GM23248 (cell line): ENCODE measurements at regions of chr3 and their contacts with region 1.

Region 1: DNA sequence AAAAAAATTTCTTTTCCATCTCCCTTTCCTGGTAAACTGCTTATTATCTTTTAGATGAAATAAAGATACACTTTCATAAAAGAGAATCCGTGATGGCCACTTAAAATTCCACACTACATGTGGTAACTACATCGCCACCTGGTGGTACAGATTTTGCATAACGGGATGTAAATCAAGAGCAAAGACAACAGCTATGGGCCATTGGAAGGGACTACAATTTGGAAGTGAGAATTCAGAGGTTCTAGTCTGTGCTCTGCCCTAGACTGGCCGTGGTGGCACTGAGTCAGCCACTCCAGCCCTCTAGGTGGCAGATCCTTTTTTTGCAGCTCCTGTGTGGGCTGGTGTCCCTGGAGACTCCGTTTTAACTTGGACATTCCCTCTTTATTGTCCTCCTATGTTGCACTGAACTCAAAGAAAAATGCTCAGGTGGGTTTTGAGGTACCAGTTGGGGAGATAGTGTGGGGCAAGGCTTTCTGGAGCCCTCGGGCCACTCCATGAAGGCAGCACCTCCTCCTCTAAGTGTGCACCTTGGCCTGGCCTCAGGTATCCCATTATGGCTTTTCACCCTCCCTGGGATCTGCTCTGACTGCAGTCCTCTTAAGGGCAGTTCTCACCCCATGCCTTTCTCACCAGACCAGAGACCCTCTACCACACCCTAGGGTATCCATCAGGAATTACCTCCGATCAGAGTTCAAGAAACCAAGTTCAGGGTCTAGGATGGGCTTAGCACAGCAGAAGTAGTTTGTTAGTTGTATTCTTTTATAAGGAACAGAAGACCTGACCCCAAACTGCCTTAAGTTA is 54.9 kb downstream of the SPSB4 start:
- DNase-seq: peak; percentile 86
- H3K4me3 ChIP-seq: no peak overlapping the region
- H3K27ac ChIP-seq: no peak overlapping the region
- H3K4me1 ChIP-seq: no peaks in the 10 kb centered on the region
- H3K27me3 ChIP-seq: no peaks in the 10 kb centered on the region

Region 2: DNA sequence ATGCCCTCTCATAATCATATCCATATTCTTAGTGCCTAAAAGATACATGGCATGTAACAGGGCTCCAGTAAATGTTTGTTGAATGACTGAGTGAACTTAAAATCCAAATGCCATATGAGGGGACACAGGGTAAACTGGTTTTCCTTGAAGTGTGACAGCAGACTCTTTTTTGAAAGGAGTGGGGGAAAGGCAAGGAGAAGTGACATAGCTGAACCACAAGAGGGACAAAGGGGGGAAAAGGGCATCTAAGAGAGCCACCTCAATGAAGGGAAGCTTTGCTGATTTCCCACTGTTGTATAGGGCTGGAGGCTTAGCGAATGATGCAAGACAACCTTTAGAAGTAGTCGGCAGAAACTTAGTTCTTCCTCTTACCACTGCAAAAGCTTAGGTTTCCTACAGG is 419.1 kb before region 1 on chr3:
- in situ Hi-C with region 1: no loop called
- DNase-seq: no peak
- H3K4me3 ChIP-seq: no peak overlapping the region
- H3K27ac ChIP-seq: no peak overlapping the region
- H3K4me1 ChIP-seq: no peaks in the 10 kb centered on the region
- H3K27me3 ChIP-seq: no peaks in the 10 kb centered on the region; the same call in 1 of the 2 replicates

Region 3: DNA sequence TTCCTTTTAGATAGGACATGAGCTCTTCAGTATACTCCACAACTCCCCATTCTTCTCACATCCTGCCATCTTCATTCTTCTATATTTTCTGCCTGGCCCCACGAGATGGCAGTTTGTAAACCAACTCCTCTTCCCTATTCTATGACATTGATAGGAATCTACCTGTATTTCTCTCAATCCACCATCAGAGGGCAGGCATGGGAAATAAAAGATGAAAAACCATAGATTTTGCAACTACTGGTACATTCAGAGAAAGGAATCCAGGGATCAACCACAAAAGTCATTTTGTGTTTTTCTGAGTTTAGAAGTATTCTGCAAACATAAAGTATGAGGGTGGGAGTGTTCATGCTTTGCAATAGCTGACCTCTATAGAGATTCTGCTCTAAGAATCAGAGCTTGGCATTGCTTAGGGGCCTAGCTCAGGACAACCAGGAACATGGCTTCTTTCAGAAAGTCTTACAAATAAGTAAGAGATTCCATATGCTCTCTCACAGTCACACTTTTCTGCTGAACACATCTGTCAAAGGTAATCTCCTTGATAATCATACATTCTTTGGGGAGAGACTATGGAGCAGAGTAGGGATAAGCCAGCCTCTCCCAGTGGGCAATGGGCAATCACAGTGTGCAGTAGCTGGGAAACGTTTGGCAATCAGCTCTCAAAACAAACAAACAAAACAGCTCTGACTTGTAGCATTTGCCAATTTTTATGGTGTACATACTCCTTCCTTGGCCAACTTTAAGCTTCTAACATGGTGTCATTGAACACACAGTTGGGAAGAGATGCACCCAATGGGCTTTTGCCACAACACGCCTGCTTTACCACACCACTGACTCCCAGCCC is 207.5 kb before region 1 on chr3:
- in situ Hi-C with region 1: loop called (anchors 5 kb)
- DNase-seq: peak; percentile 89
- H3K4me3 ChIP-seq: no peak overlapping the region
- H3K27ac ChIP-seq: peak overlapping the region; percentile 15; the same call in 1 of the 2 replicates
- H3K4me1 ChIP-seq: peaks cover 6% of the 10 kb centered on the region
- H3K27me3 ChIP-seq: peaks cover 26% of the 10 kb centered on the region

Region 4: DNA sequence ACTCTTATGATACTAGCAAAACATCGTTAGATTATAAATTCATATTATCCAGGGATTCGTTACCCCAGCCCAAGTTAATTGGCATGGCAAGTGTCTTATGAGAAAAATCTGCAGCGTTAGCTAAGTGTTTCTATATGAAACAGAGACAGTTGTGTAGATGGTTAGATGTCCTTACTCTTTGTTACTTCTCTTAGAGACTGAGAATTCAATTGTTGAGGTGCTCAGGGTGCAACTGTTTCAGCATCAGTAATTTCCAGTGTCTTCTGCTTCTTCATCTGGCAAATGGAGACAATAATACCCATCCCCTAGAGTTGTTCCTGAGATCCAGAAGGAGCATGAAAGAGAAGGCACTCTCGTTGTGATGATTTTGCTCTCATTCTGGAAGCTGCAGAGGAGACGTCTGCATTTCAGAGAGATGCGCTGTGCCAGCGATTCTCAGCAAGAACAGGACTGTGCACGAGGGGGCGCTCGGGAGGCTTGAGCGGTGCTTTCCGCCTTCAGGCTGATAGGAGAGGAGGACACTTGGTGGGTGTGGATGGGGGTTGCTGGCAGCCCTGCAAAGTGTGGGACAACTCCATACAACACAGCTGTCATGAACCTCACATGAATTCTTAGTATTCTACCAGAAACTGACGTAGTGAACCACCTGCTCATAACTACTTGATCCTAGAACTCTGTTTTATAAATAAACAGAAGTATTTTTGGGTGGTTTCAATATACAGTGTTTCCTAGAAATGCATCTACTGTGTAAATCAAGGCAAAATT is 94.6 kb before region 1 on chr3:
- in situ Hi-C with region 1: loop called (anchors 5 kb)
- DNase-seq: peak; percentile 82
- H3K4me3 ChIP-seq: no peak overlapping the region
- H3K27ac ChIP-seq: no peak overlapping the region
- H3K4me1 ChIP-seq: no peaks in the 10 kb centered on the region
- H3K27me3 ChIP-seq: peaks cover 25% of the 10 kb centered on the region

Region 5: GRCh38 chr3:141686466-141687291 is 580.7 kb after region 1 on chr3:
- in situ Hi-C with region 1: no loop called
- DNase-seq: peak; percentile 82
- H3K4me3 ChIP-seq: peak overlapping the region; percentile 73
- H3K27ac ChIP-seq: peak overlapping the region; percentile 43
- H3K4me1 ChIP-seq: peaks cover 6% of the 10 kb centered on the region
- H3K27me3 ChIP-seq: no peaks in the 10 kb centered on the region